Dorsolateral prefrontal cortex (tissue), 120 donors: ENCODE measurements at regions of chr6 and their contacts with region 1.

Region 1: DNA sequence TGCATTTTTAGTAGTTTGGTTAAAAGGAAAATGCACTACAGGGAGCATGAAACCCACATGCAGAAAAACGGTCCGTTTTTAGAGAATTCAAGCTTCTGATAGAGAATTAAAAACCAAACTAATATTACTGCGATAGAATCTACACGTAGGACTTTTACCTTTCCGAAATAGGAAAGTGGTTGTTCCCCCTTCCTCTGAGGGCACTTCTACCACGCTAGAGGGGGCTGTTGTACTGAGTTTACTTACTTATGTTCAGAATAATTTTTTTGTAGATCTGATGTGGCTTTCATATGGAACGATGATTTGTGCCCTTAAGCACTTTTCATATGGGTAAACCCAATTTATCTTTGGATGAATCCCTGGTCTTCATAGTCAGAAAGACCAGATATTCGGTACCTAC is 264.3 kb upstream of the PLN start:
- DNase-seq: peak in 2 of 10 donors; percentile 33 to 38
- H3K4me3 ChIP-seq: peak overlapping the region in 5 of 59 donors; percentile 1 to 21 (median 10)
- H3K27ac ChIP-seq: peak overlapping the region in 3 of 59 donors; percentile 6 to 16 (median 8)
- H3K27me3 ChIP-seq: no peaks in the 10 kb centered on the region
- CTCF ChIP-seq: peak; percentile 51 to 84 (median 73)

Region 2: DNA sequence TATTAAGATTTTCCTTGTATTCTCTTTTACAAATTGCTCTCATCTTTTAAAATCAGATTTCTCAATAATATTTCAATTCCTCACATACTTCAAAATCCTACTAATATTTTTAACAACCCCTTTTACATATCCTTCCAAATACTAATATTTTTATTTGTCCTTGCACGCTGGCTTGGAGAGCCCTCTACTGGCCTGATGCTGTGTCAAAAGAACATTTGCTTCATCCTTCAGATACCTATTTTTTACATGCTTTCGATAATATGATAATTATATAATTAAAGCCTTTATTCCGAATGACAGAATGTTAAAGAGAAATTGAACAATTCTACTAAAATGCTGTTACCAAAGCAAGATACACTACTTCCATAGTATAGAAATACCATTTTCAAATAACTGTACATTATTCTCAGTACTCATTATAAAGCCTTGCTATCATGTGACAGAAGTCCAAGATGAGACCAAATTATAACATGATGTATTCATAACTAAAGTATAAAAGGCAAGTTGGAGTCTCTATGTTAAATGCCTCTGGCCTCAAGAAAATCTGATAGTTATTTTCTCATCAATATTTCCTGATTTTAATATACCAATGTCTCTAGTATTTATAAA is 225.3 kb after region 1 on chr6:
- intact Hi-C with region 1: loop called (anchors 2 to 10 kb)
- DNase-seq: peak in 5 of 10 donors; percentile 27 to 60 (median 47)
- H3K4me3 ChIP-seq: no peak overlapping the region
- H3K27ac ChIP-seq: peak overlapping the region in 1 of 59 donors; percentile 2
- H3K27me3 ChIP-seq: no peaks in the 10 kb centered on the region
- CTCF ChIP-seq: peak; percentile 50 to 95 (median 76)

Region 3: GRCh38 chr6:118551063-118552053 is 267.6 kb after region 1 on chr6:
- intact Hi-C with region 1: loop called (anchors 1 to 10 kb)
- DNase-seq: no peak
- H3K4me3 ChIP-seq: peak overlapping the region in 1 of 59 donors; percentile 33
- H3K27ac ChIP-seq: no peak overlapping the region
- H3K27me3 ChIP-seq: no peaks in the 10 kb centered on the region
- CTCF ChIP-seq: peak in 55 of 56 donors; percentile 42 to 79 (median 65)

Region 4: DNA sequence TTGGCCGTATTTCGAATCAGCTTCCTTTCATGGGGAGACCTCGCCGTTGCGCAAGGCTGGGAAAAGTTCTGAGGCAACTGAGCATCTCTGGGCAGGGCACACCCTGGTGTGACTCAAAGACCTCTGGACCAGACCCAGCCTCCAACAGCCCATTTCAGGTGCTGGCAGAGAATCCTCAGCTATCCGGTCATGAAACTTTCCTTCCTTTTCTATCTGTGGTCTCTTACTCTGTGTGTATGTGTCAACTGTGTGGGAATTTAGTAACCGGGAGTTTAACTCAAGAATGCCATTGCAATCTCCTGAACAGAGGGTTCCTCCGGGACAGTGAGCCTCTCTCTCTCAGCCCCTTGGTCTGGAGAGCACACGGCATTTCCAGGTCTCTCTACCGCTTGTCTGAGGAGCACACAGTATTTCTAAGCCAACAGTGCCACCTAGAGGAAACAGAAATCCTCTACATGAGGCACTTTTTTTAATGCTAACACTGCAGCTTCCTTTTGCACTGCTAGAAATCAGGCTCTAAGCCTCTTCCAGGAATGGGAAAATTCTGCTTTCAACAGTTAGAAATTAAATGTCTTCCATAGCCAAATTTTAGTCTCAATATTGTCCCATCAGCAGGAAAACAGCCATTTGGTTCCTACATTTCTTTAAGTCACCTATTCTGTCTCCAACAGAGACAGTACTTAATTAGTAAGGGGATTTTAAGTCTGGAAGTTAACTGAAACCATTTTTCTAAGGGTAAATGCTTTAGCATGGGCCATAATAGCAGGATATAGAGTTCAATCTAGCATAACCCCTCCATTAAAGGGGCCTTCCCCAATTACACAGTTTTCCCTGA is 297.0 kb after region 1 on chr6:
- intact Hi-C with region 1: loop called in 1 of 2 experiments (anchors 1 kb)
- DNase-seq: peak in 2 of 10 donors; percentile 7 to 68
- H3K4me3 ChIP-seq: peak overlapping the region in 1 of 59 donors; percentile 7
- H3K27ac ChIP-seq: peak overlapping the region in 26 of 59 donors; percentile 1 to 57 (median 36)
- H3K27me3 ChIP-seq: no peaks in the 10 kb centered on the region
- CTCF ChIP-seq: peak; percentile 59 to 91 (median 80)

Region 5: GRCh38 chr6:118618679-118619377 is 335.1 kb after region 1 on chr6:
- intact Hi-C with region 1: loop called (anchors 5 to 10 kb)
- DNase-seq: peak in 9 of 10 donors; percentile 35 to 78 (median 52)
- H3K4me3 ChIP-seq: no peak overlapping the region
- H3K27ac ChIP-seq: peak overlapping the region in 1 of 59 donors; percentile 10
- H3K27me3 ChIP-seq: no peaks in the 10 kb centered on the region
- CTCF ChIP-seq: peak; percentile 54 to 90 (median 84)

Region 6: GRCh38 chr6:118791499-118791898 is 507.7 kb after region 1 on chr6:
- intact Hi-C with region 1: loop called in 1 of 2 experiments (anchors 5 kb)
- DNase-seq: no peak
- H3K4me3 ChIP-seq: no peak overlapping the region
- H3K27ac ChIP-seq: no peak overlapping the region
- H3K27me3 ChIP-seq: no peaks in the 10 kb centered on the region
- CTCF ChIP-seq: no peak